CD4-positive, alpha-beta T cell (primary cell): ENCODE measurements at regions of chr1 and their contacts with region 1.

Region 1: DNA sequence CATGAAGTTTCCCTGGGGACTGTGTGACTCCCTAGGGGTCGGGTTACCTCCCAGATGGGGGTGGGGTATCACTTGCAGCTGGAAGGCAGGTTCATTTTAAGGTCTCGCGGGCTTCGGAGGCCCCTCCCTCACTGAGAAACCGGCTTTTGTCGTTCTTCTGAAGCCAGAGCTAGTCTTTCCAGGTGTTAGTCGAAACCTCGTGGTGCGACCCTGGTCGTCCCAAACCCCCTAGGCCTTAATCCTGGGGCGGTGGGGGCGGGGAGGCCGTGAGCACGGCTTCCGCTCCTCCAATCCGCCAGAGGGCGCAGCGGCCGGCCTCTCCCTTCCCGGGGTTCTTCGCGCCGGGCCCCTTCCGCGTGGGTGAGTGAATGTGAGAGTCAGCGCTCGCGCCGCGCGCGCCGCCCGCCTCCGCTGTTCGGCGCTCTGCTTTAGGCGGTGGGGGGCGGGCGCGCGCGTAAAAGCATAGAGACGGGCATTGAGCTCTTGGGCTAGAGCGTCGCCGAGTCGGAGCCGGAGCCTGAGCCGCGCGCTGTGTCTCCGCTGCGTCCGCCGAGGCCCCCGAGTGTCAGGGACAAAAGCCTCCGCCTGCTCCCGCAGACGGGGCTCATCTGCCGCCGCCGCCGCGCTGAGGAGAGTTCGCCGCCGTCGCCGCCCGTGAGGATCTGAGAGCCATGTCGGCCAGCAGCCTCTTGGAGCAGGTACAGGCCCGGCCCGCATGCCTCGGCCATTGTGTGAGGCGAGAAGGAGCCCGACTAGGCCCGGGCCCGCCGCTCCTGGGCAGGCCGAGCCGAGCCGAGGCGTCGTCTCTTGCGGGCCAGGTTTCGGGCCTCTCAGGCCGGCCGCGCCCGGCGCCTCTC is at the start of gene YTHDF2:
- DNase-seq: peak; percentile 97 to 99 (median 98)
- ATAC-seq: peak; percentile 91
- H3K4me3 ChIP-seq: peak within 1 kb of the TSS; percentile 95
- H3K4me3 Mint-ChIP-seq: peak within 1 kb of the TSS; percentile 98
- H3K27ac ChIP-seq: peak within 1 kb of the TSS; percentile 82 to 89
- H3K27ac Mint-ChIP-seq: peak within 1 kb of the TSS; percentile 92
- H3K4me1 ChIP-seq: peaks cover 32% of the 10 kb centered on the region
- H3K4me1 Mint-ChIP-seq: peaks cover 44% of the 10 kb centered on the region
- H3K27me3 ChIP-seq: no peaks in the 10 kb centered on the region
- H3K27me3 Mint-ChIP-seq: no peaks in the 10 kb centered on the region
- CTCF ChIP-seq: peak; percentile 94
- total RNA-seq, gene YTHDF2: 85.0 to 100 TPM

Region 2: DNA sequence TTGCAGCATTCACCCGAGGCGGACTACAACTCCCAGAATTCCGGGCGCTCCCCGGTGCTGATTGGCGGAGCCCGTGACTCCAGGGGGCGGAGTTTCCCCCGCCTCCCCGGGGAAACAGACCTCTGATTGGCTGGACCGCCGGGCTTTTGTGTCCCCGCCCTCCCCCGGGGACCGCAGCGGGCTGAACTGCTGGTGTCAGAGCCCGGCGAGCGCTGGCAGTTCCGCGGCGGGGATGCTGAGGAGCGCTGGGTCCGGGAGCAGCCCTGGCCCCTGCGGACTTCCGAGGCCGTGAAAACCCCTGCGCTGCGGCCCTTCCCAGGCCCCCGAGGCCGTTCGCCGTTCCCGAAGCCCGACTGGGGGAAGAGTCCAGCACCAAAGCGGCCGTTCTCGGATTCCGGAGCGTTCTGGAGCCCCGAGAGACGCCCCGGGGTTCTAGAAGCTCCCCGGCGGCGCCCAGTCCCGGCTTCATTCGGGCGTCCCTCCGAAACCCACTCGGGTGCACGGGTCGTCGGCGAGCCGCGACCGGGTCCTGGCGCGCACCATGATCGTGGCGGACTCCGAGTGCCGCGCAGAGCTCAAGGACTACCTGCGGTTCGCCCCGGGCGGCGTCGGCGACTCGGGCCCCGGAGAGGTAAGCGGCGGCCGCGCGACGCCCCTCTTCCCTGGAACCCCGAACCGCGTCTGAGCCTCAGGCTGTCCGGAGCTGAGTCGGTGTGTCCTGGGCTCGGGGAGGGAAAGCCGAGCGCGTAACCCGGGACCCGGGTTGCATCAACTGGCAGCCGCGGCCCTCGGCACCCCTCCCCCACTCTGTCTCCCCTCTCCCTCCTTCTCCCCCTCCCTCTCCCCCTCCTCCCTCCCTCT is 477.1 kb before region 1 on chr1 and contains the start of gene SESN2:
- CTCF ChIA-PET with region 1: no interaction called
- POLR2A ChIA-PET with region 1: interaction called, 4 read pairs
- intact Hi-C with region 1: loop called in 1 of 2 experiments (anchors 10 kb)
- DNase-seq: peak; percentile 98 to 99 (median 99)
- ATAC-seq: peak; percentile 98
- H3K4me3 ChIP-seq: peak within 1 kb of the TSS; percentile 98
- H3K4me3 Mint-ChIP-seq: peak within 1 kb of the TSS; percentile 91
- H3K27ac ChIP-seq: peak within 1 kb of the TSS; percentile 29 to 54
- H3K27ac Mint-ChIP-seq: peak within 1 kb of the TSS; percentile 76
- H3K4me1 ChIP-seq: peaks cover 72% of the 10 kb centered on the region
- H3K4me1 Mint-ChIP-seq: peaks cover 46% of the 10 kb centered on the region
- H3K27me3 ChIP-seq: no peaks in the 10 kb centered on the region
- H3K27me3 Mint-ChIP-seq: no peaks in the 10 kb centered on the region
- CTCF ChIP-seq: no peak
- total RNA-seq, gene SESN2: 8.8 to 9.6 TPM

Region 3: DNA sequence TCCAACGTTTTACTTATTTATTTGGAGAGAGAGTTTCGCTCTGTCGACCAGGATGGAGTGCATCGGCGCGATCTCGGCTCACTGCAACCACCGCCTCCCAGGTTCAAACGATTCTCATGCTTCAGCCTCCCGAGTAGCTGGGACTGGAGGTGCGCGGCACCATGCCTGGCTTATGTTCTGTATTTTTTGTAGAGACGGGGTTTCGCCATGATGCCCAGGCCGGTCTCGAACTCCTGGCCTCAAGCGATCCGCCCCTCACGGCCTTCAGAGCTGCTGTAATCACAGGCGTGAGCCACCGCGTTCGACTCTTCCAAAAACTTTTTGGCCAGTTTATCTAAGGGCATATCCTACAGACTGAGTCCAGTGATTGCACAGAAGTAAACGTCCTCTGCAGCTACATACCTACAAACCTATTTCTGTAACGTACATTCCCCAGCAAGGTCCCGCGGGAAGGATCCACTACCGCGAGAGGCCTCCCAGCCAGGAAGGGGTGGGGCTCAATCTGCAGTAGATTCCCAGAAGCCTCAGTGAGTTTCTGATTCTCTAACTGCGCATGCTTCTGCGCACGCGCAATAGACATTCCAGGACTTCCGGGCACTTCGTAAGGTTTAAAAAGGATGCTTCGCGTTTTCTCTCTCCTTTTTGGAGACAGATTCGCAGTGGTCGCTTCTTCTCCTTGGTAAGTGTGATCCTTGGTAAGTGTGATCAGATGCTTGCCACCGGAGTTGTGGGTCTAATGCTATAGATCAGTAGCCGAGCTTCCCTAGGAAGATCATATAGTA is 231.1 kb before region 1 on chr1 and contains the start of gene RCC1:
- CTCF ChIA-PET with region 1: interaction called, 3 read pairs
- POLR2A ChIA-PET with region 1: interaction called, 10 read pairs
- intact Hi-C with region 1: loop called (anchors 5 kb)
- DNase-seq: peak; percentile 86 to 99 (median 92)
- ATAC-seq: peak; percentile 92
- H3K4me3 ChIP-seq: peak within 1 kb of the TSS; percentile 86
- H3K4me3 Mint-ChIP-seq: peak within 1 kb of the TSS; percentile 94
- H3K27ac ChIP-seq: peak within 1 kb of the TSS; percentile 65 to 79
- H3K27ac Mint-ChIP-seq: peak within 1 kb of the TSS; percentile 88
- H3K4me1 ChIP-seq: peaks cover 38% of the 10 kb centered on the region
- H3K4me1 Mint-ChIP-seq: peaks cover 49% of the 10 kb centered on the region
- H3K27me3 ChIP-seq: no peaks in the 10 kb centered on the region
- H3K27me3 Mint-ChIP-seq: no peaks in the 10 kb centered on the region
- CTCF ChIP-seq: no peak
- total RNA-seq, gene RCC1: 8.5 to 9.9 TPM

Region 4: DNA sequence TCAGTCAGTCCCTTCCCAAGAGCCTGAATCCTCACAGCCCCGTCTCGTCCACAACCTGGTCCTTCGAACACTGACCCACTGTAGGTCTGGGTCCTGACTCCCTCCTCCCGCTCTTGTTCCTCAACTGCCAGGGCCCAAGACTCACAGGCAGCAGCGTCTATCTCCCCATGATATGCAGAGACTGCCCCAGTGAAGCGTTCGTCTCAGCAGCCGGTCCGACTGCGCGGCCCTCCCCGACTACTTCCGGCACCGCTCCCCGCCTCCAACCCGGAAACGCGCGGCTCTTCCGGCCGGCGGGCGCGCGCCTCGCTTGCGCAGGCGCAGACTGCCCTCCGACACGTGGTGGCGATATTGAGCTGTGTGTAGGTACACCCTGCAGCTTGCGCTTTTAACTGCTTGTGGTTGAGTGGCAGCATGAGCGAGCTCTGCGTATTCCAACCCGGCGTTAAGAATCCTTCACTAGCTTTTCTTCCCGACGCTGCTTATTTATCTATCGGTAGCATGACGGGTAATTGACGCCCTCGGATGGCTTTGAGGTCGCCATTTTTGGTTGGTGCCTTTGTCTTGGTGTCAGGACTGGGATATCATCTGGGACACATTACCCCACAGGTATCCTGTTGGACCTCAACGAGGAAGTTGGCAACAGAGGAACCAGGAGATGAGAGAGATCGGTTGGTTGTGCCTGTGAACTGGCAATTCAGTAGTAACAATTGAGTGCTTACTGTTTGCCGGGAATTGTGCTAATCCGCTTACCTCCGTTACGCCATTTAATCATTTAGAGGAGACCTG is 93.6 kb before region 1 on chr1 and contains the start of gene TAF12:
- CTCF ChIA-PET with region 1: interaction called, 43 read pairs
- POLR2A ChIA-PET with region 1: interaction called, 172 read pairs
- intact Hi-C with region 1: loop called (anchors 1 kb)
- DNase-seq: peak; percentile 87 to 98 (median 92)
- ATAC-seq: peak; percentile 81
- H3K4me3 ChIP-seq: peak within 1 kb of the TSS; percentile 99
- H3K4me3 Mint-ChIP-seq: peak within 1 kb of the TSS; percentile 92
- H3K27ac ChIP-seq: peak within 1 kb of the TSS; percentile 94
- H3K27ac Mint-ChIP-seq: peak within 1 kb of the TSS; percentile 97
- H3K4me1 ChIP-seq: peaks cover 54% of the 10 kb centered on the region
- H3K4me1 Mint-ChIP-seq: peaks cover 62% of the 10 kb centered on the region
- H3K27me3 ChIP-seq: no peaks in the 10 kb centered on the region
- H3K27me3 Mint-ChIP-seq: no peaks in the 10 kb centered on the region
- CTCF ChIP-seq: peak; percentile 63
- total RNA-seq, gene TAF12: 7.0 to 8.0 TPM

Region 5: DNA sequence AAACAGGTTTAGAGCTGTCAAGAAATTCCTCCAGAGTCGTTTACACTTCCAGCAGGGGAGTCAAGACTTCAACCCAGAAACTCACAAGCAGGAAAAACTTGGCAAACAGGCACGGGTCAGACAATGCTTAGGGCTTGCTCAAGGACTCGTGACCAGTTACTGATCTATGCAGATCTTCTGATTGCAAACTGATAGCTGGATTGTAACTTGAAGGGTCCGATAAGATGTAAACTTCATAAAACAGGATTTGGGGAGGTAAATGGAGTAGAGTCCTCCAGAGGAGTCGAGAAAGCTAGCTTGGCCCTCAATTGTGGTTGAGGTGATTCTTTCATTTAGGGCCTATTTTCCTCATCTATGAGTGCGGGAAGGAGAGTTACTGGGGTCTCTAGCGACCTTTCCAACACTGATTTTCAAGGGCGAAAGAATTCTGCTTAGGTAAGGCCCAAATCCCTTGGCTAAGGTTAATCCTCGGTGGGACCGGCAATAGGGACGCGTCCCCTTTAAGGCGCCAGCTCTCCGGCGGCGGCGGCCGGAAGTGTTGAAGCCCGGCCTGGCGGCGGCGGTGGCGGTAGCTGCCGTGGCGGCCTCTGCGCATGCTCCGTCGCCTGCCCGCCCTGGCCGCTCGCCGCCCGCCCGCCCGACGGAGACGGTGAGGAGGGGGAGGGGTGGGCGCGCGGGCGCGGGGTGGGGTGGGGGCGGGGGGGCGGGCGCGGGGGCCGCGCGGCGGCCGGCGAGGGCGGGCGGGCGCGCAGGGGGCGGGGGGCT is 68.3 kb before region 1 on chr1 and contains the start of gene GMEB1:
- CTCF ChIA-PET with region 1: interaction called, 33 read pairs
- POLR2A ChIA-PET with region 1: interaction called, 71 read pairs
- intact Hi-C with region 1: loop called (anchors 1 kb)
- DNase-seq: peak; percentile 67 to 93 (median 82)
- ATAC-seq: peak; percentile 60
- H3K4me3 ChIP-seq: peak within 1 kb of the TSS; percentile 99
- H3K4me3 Mint-ChIP-seq: peak within 1 kb of the TSS; percentile 100
- H3K27ac ChIP-seq: peak within 1 kb of the TSS; percentile 96 to 97
- H3K27ac Mint-ChIP-seq: peak within 1 kb of the TSS; percentile 100
- H3K4me1 ChIP-seq: peaks cover 35% of the 10 kb centered on the region
- H3K4me1 Mint-ChIP-seq: peaks cover 24% of the 10 kb centered on the region
- H3K27me3 ChIP-seq: no peaks in the 10 kb centered on the region
- H3K27me3 Mint-ChIP-seq: no peaks in the 10 kb centered on the region
- CTCF ChIP-seq: no peak
- total RNA-seq, gene GMEB1: 9.0 to 11.8 TPM

Region 6: DNA sequence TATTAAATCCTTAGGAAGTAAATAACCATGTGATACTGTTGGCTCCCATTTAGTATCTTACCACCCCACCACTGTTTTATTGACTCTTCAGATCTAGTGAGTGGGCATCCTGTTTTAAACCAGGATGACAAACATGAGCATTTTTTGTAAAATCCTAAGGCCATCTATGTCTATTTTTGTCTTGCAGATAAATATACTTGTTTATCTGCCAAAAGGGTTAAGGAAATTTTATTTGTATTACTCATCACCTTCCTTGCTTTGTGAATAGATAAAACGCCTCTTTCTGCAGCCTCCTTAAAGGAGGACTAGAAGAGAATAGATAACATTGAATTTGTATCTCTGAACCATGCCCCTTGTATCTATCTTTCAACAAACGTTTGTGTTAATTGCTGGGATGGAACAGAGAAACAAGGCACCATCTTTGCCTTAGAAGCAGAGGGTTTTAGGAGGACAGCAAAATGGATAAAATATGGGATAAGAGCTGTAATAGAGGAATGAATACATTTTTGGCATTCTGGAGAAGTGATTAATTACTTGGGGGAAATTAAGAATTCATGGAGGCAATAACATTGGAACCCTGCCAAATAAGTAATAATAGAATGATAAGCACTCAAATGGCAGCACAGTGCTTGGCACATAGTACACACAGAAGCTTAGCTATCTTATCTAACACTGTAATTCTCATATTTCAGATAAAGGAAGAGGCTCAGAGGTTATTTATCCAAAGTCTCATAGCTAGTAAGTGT is 14.8 kb after region 1 on chr1:
- CTCF ChIA-PET with region 1: interaction called, 17 read pairs
- POLR2A ChIA-PET with region 1: interaction called, 12 read pairs
- intact Hi-C with region 1: no loop called
- DNase-seq: no peak
- ATAC-seq: no peak
- H3K4me3 ChIP-seq: no peak overlapping the region
- H3K4me3 Mint-ChIP-seq: peak overlapping the region; percentile 30
- H3K27ac ChIP-seq: no peak overlapping the region
- H3K27ac Mint-ChIP-seq: peak overlapping the region; percentile 34
- H3K4me1 ChIP-seq: peaks cover 61% of the 10 kb centered on the region
- H3K4me1 Mint-ChIP-seq: peaks cover 64% of the 10 kb centered on the region
- H3K27me3 ChIP-seq: no peaks in the 10 kb centered on the region
- H3K27me3 Mint-ChIP-seq: no peaks in the 10 kb centered on the region
- CTCF ChIP-seq: no peak

Region 7: GRCh38 chr1:28775121-28775944 is 38.7 kb after region 1 on chr1:
- CTCF ChIA-PET with region 1: interaction called, 18 read pairs
- POLR2A ChIA-PET with region 1: interaction called, 41 read pairs
- intact Hi-C with region 1: no loop called
- DNase-seq: peak; percentile 39 to 89 (median 66)
- ATAC-seq: peak; percentile 93
- H3K4me3 ChIP-seq: peak overlapping the region; percentile 54
- H3K4me3 Mint-ChIP-seq: peak overlapping the region; percentile 88
- H3K27ac ChIP-seq: peak overlapping the region; percentile 26 to 38
- H3K27ac Mint-ChIP-seq: peak overlapping the region; percentile 90
- H3K4me1 ChIP-seq: peaks cover 14% of the 10 kb centered on the region
- H3K4me1 Mint-ChIP-seq: peaks cover 13% of the 10 kb centered on the region
- H3K27me3 ChIP-seq: no peaks in the 10 kb centered on the region
- H3K27me3 Mint-ChIP-seq: no peaks in the 10 kb centered on the region
- CTCF ChIP-seq: no peak

Region 8: GRCh38 chr1:28790377-28791351 is 54.0 kb after region 1 on chr1:
- CTCF ChIA-PET with region 1: no interaction called
- POLR2A ChIA-PET with region 1: no interaction called
- intact Hi-C with region 1: no loop called
- DNase-seq: no peak
- ATAC-seq: no peak
- H3K4me3 ChIP-seq: no peak overlapping the region
- H3K4me3 Mint-ChIP-seq: no peak overlapping the region
- H3K27ac ChIP-seq: no peak overlapping the region
- H3K27ac Mint-ChIP-seq: no peak overlapping the region
- H3K4me1 ChIP-seq: peaks cover under 1% of the 10 kb centered on the region
- H3K4me1 Mint-ChIP-seq: no peaks in the 10 kb centered on the region
- H3K27me3 ChIP-seq: no peaks in the 10 kb centered on the region
- H3K27me3 Mint-ChIP-seq: peaks cover 6% of the 10 kb centered on the region
- CTCF ChIP-seq: no peak

Region 9: GRCh38 chr1:28926629-28927265 is 190.1 kb after region 1 on chr1:
- CTCF ChIA-PET with region 1: no interaction called
- POLR2A ChIA-PET with region 1: no interaction called
- intact Hi-C with region 1: no loop called
- DNase-seq: peak in 8 of 14 experiments; percentile 28 to 92 (median 40)
- ATAC-seq: peak; percentile 82
- H3K4me3 ChIP-seq: peak overlapping the region; percentile 32
- H3K4me3 Mint-ChIP-seq: peak overlapping the region; percentile 78
- H3K27ac ChIP-seq: peak overlapping the region; percentile 71 to 75
- H3K27ac Mint-ChIP-seq: peak overlapping the region; percentile 85
- H3K4me1 ChIP-seq: peaks cover 68% of the 10 kb centered on the region
- H3K4me1 Mint-ChIP-seq: peaks cover 67% of the 10 kb centered on the region
- H3K27me3 ChIP-seq: no peaks in the 10 kb centered on the region
- H3K27me3 Mint-ChIP-seq: no peaks in the 10 kb centered on the region
- CTCF ChIP-seq: no peak

Region 10: DNA sequence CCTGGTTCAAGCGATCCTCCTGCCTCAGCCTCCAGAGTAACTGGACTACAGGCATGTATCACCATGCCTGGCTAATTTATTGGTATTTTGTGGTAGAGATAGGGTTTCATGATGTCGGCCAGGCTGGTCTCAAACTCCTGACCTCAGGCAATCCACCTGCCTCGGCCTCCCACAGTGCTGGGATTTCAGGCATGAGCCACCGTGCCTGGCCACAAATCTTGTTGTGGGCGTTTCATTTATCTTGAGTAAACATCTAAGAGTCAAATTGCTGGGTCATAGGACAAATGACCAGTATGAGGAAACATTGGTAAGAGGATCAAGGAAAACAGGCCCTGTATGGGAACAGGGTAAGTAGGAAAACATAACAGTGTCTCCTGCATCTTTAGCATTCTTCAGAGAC is 369.2 kb after region 1 on chr1:
- CTCF ChIA-PET with region 1: no interaction called
- POLR2A ChIA-PET with region 1: no interaction called
- intact Hi-C with region 1: no loop called
- DNase-seq: no peak
- ATAC-seq: no peak
- H3K4me3 ChIP-seq: no peak overlapping the region
- H3K4me3 Mint-ChIP-seq: no peak overlapping the region
- H3K27ac ChIP-seq: no peak overlapping the region
- H3K27ac Mint-ChIP-seq: no peak overlapping the region
- H3K4me1 ChIP-seq: no peaks in the 10 kb centered on the region
- H3K4me1 Mint-ChIP-seq: no peaks in the 10 kb centered on the region
- H3K27me3 ChIP-seq: no peaks in the 10 kb centered on the region
- H3K27me3 Mint-ChIP-seq: no peaks in the 10 kb centered on the region
- CTCF ChIP-seq: no peak